Activated naive CD4-positive, alpha-beta T cell treated with anti-CD3 and anti-CD28 coated beads for 36 hours (primary cell): ENCODE measurements at regions of chr19 and their contacts with region 1.

Region 1: GRCh38 chr19:49877020-49877878 is at the starts of genes AKT1S1 and TBC1D17:
- DNase-seq: peak; percentile 99
- H3K4me3 Mint-ChIP-seq: no peak within 1 kb of the TSS
- H3K27ac Mint-ChIP-seq: no peak within 1 kb of the TSS
- H3K4me1 Mint-ChIP-seq: peaks cover 28% of the 10 kb centered on the region
- H3K27me3 Mint-ChIP-seq: no peaks in the 10 kb centered on the region
- total RNA-seq, gene AKT1S1: 13.3 to 14.2 TPM
- total RNA-seq, gene TBC1D17: 29.8 to 32.4 TPM

Region 2: DNA sequence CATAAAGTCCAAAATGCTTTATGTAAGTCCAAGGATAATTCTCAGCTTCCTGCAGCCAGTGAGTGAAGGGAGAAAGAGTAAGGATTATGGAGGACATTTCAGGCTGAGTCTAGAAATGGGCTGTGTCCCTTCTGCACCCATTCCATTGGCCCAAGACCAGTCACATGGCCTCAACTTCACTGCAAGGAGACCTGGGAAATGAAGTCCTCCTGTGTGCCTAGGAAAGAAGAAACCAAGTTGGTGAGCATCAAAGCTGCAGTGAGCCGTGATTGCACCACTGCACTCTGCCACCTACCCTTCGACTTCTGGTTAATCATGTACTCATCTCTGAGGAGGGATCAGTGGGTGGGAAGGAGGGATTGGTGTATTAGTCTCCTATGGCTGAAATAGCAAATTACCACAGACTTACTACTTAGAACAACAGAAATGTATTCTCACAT is 545.6 kb before region 1 on chr19:
- CTCF ChIA-PET with region 1: no interaction called
- intact Hi-C with region 1: loop called (anchors 10 kb)
- DNase-seq: peak; percentile 84
- H3K4me3 Mint-ChIP-seq: peak overlapping the region; percentile 44
- H3K27ac Mint-ChIP-seq: peak overlapping the region; percentile 81
- H3K4me1 Mint-ChIP-seq: peaks cover 74% of the 10 kb centered on the region
- H3K27me3 Mint-ChIP-seq: no peaks in the 10 kb centered on the region

Region 3: GRCh38 chr19:49590071-49590970 is 286.9 kb before region 1 on chr19:
- CTCF ChIA-PET with region 1: no interaction called
- intact Hi-C with region 1: loop called (anchors 2 kb)
- DNase-seq: peak; percentile 96
- H3K4me3 Mint-ChIP-seq: peak overlapping the region; percentile 77
- H3K27ac Mint-ChIP-seq: peak overlapping the region; percentile 85
- H3K4me1 Mint-ChIP-seq: peaks cover 25% of the 10 kb centered on the region
- H3K27me3 Mint-ChIP-seq: no peaks in the 10 kb centered on the region

Region 4: GRCh38 chr19:49817964-49818648 is 59.1 kb before region 1 on chr19 and contains the start of gene MED25:
- CTCF ChIA-PET with region 1: no interaction called
- intact Hi-C with region 1: loop called (anchors 1 kb)
- DNase-seq: peak; percentile 87
- H3K4me3 Mint-ChIP-seq: peak within 1 kb of the TSS; percentile 92
- H3K27ac Mint-ChIP-seq: peak within 1 kb of the TSS; percentile 99
- H3K4me1 Mint-ChIP-seq: peaks cover 16% of the 10 kb centered on the region
- H3K27me3 Mint-ChIP-seq: no peaks in the 10 kb centered on the region
- total RNA-seq, gene MED25: 32.4 to 39.2 TPM

Region 5: GRCh38 chr19:49832556-49832955 is 44.7 kb before region 1 on chr19:
- CTCF ChIA-PET with region 1: no interaction called
- intact Hi-C with region 1: no loop called
- DNase-seq: no peak
- H3K4me3 Mint-ChIP-seq: no peak overlapping the region
- H3K27ac Mint-ChIP-seq: no peak overlapping the region
- H3K4me1 Mint-ChIP-seq: no peaks in the 10 kb centered on the region
- H3K27me3 Mint-ChIP-seq: no peaks in the 10 kb centered on the region

Region 6: GRCh38 chr19:49896863-49897621 is 19.8 kb after region 1 on chr19 and contains the start of gene IL4I1:
- CTCF ChIA-PET with region 1: no interaction called
- intact Hi-C with region 1: loop called (anchors 1 kb)
- DNase-seq: peak; percentile 85
- H3K4me3 Mint-ChIP-seq: peak within 1 kb of the TSS; percentile 67
- H3K27ac Mint-ChIP-seq: peak within 1 kb of the TSS; percentile 97
- H3K4me1 Mint-ChIP-seq: peaks cover 31% of the 10 kb centered on the region
- H3K27me3 Mint-ChIP-seq: no peaks in the 10 kb centered on the region
- total RNA-seq, gene IL4I1: 7.2 to 7.5 TPM

Region 7: GRCh38 chr19:50025024-50025789 is 148.0 kb after region 1 on chr19 and contains the start of gene VRK3:
- CTCF ChIA-PET with region 1: no interaction called
- intact Hi-C with region 1: loop called (anchors 1 kb)
- DNase-seq: peak; percentile 99
- H3K4me3 Mint-ChIP-seq: peak within 1 kb of the TSS; percentile 95
- H3K27ac Mint-ChIP-seq: peak within 1 kb of the TSS; percentile 97
- H3K4me1 Mint-ChIP-seq: peaks cover 50% of the 10 kb centered on the region
- H3K27me3 Mint-ChIP-seq: no peaks in the 10 kb centered on the region
- total RNA-seq, gene VRK3: 45.7 to 54.3 TPM